Naive thymus-derived CD4-positive, alpha-beta T cell (primary cell): ENCODE measurements at regions of chr3 and their contacts with region 1.

Region 1: GRCh38 chr3:182713743-182714517 is 79.4 kb upstream of the ATP11B start:
- DNase-seq: peak in 6 of 9 donors; percentile 11 to 51 (median 33)
- ATAC-seq: peak; percentile 66
- H3K4me3 ChIP-seq: no peak overlapping the region
- H3K4me3 Mint-ChIP-seq: no peak overlapping the region
- H3K27ac ChIP-seq: no peak overlapping the region
- H3K27ac Mint-ChIP-seq: no peak overlapping the region
- H3K4me1 ChIP-seq: no peaks in the 10 kb centered on the region
- H3K4me1 Mint-ChIP-seq: peaks cover 4 to 16% (median 7%) of the 10 kb centered on the region in 7 donors
- H3K27me3 ChIP-seq: no peaks in the 10 kb centered on the region
- H3K27me3 Mint-ChIP-seq: peaks cover 0 to 2% (median 0%) of the 10 kb centered on the region in 5 donors

Region 2: GRCh38 chr3:182692021-182692420 is 21.9 kb before region 1 on chr3:
- CTCF ChIA-PET with region 1: no interaction called
- POLR2A ChIA-PET with region 1: no interaction called
- intact Hi-C with region 1: no loop called
- DNase-seq: no peak
- ATAC-seq: no peak
- H3K4me3 ChIP-seq: no peak overlapping the region
- H3K4me3 Mint-ChIP-seq: no peak overlapping the region
- H3K27ac ChIP-seq: no peak overlapping the region
- H3K27ac Mint-ChIP-seq: no peak overlapping the region
- H3K4me1 ChIP-seq: no peaks in the 10 kb centered on the region
- H3K4me1 Mint-ChIP-seq: no peaks in the 10 kb centered on the region
- H3K27me3 ChIP-seq: no peaks in the 10 kb centered on the region
- H3K27me3 Mint-ChIP-seq: peaks cover 7 to 50% (median 25%) of the 10 kb centered on the region in 5 donors

Region 3: GRCh38 chr3:182837855-182838454 is 124.0 kb after region 1 on chr3:
- CTCF ChIA-PET with region 1: interaction called, 33 read pairs
- POLR2A ChIA-PET with region 1: interaction called, 3 read pairs
- intact Hi-C with region 1: loop called (anchors 1 kb)
- DNase-seq: peak in 6 of 9 donors; percentile 5 to 52 (median 34)
- ATAC-seq: peak; percentile 53
- H3K4me3 ChIP-seq: no peak overlapping the region
- H3K4me3 Mint-ChIP-seq: no peak overlapping the region
- H3K27ac ChIP-seq: no peak overlapping the region
- H3K27ac Mint-ChIP-seq: no peak overlapping the region
- H3K4me1 ChIP-seq: no peaks in the 10 kb centered on the region
- H3K4me1 Mint-ChIP-seq: peaks cover 3 to 20% (median 4%) of the 10 kb centered on the region in 7 donors
- H3K27me3 ChIP-seq: no peaks in the 10 kb centered on the region
- H3K27me3 Mint-ChIP-seq: no peaks in the 10 kb centered on the region

Region 4: GRCh38 chr3:182909318-182910040 is 195.5 kb after region 1 on chr3:
- CTCF ChIA-PET with region 1: no interaction called
- POLR2A ChIA-PET with region 1: no interaction called
- intact Hi-C with region 1: loop called in 1 of 2 experiments (anchors 10 kb)
- DNase-seq: peak in 1 of 9 donors; percentile 16
- ATAC-seq: peak; percentile 46
- H3K4me3 ChIP-seq: no peak overlapping the region
- H3K4me3 Mint-ChIP-seq: no peak overlapping the region
- H3K27ac ChIP-seq: peak overlapping the region; percentile 16
- H3K27ac Mint-ChIP-seq: peak overlapping the region in 8 of 9 donors; percentile 20 to 88 (median 72)
- H3K4me1 ChIP-seq: peaks cover 15 to 17% of the 10 kb centered on the region in 2 donors
- H3K4me1 Mint-ChIP-seq: peaks cover 22 to 50% (median 42%) of the 10 kb centered on the region in 7 donors
- H3K27me3 ChIP-seq: no peaks in the 10 kb centered on the region
- H3K27me3 Mint-ChIP-seq: no peaks in the 10 kb centered on the region

Region 5: DNA sequence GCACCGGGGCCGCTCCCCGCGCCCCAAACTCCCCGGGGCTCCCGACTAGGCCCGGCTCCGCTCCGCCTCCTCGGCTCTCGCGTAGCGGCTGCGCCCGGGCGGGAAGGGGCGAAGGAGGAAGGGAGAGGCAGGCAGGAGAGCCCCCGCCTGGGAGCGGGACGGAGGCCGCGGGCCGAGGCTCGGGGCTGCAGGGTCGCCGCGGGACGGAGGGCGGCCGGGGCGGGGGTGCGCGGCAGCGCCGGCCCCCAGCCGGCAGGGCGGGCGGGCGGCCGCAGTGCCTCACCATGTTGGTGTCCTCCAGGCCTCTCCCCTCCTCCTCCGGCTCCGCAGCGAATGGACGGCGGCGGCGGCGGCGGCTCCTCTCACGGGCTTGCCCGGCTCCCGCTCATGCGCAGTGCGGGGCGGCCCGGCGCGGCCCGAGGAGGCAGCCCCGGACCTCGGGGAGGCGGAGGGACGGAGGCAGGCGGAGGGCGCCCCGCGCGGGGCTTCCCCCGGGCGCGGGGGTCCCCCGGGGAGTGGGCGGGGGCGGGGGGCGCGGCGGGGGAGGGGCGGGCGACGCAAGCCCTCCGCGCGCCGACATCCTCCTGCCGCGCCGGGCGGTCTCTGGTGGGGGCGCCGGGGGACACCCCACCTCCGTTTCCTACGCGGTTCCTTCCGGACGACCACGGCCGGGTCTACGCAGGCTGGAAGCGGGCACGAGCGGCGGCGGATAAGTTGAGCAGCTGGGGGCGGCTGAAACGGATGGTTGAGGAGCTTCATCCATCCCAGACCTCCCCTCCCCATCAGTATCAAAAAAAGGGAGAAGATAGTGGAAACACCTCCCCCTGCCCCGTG is 266.5 kb after region 1 on chr3 and contains the start of gene DCUN1D1:
- CTCF ChIA-PET with region 1: no interaction called
- POLR2A ChIA-PET with region 1: no interaction called
- intact Hi-C with region 1: no loop called
- DNase-seq: peak; percentile 77 to 95 (median 85)
- ATAC-seq: peak; percentile 94
- H3K4me3 ChIP-seq: peak within 1 kb of the TSS; percentile 75
- H3K4me3 Mint-ChIP-seq: peak within 1 kb of the TSS in 9 of 10 donors; percentile 87 to 97 (median 91)
- H3K27ac ChIP-seq: peak within 1 kb of the TSS; percentile 79
- H3K27ac Mint-ChIP-seq: peak within 1 kb of the TSS; percentile 73 to 95 (median 91)
- H3K4me1 ChIP-seq: peaks cover 18 to 20% of the 10 kb centered on the region in 2 donors
- H3K4me1 Mint-ChIP-seq: peaks cover 14 to 46% (median 42%) of the 10 kb centered on the region in 7 donors
- H3K27me3 ChIP-seq: no peaks in the 10 kb centered on the region
- H3K27me3 Mint-ChIP-seq: no peaks in the 10 kb centered on the region
- total RNA-seq, gene DCUN1D1: 23.7 to 53.0 (median 34.0) TPM

Region 6: GRCh38 chr3:183188895-183189462 is 475.0 kb after region 1 on chr3:
- CTCF ChIA-PET with region 1: no interaction called
- POLR2A ChIA-PET with region 1: no interaction called
- intact Hi-C with region 1: loop called in 1 of 2 experiments (anchors 1 kb)
- DNase-seq: peak in 1 of 9 donors; percentile 17
- ATAC-seq: peak; percentile 50
- H3K4me3 ChIP-seq: no peak overlapping the region
- H3K4me3 Mint-ChIP-seq: no peak overlapping the region
- H3K27ac ChIP-seq: no peak overlapping the region
- H3K27ac Mint-ChIP-seq: no peak overlapping the region
- H3K4me1 ChIP-seq: no peaks in the 10 kb centered on the region
- H3K4me1 Mint-ChIP-seq: peaks cover 0 to 16% (median 0%) of the 10 kb centered on the region in 7 donors
- H3K27me3 ChIP-seq: no peaks in the 10 kb centered on the region
- H3K27me3 Mint-ChIP-seq: no peaks in the 10 kb centered on the region

Region 7: DNA sequence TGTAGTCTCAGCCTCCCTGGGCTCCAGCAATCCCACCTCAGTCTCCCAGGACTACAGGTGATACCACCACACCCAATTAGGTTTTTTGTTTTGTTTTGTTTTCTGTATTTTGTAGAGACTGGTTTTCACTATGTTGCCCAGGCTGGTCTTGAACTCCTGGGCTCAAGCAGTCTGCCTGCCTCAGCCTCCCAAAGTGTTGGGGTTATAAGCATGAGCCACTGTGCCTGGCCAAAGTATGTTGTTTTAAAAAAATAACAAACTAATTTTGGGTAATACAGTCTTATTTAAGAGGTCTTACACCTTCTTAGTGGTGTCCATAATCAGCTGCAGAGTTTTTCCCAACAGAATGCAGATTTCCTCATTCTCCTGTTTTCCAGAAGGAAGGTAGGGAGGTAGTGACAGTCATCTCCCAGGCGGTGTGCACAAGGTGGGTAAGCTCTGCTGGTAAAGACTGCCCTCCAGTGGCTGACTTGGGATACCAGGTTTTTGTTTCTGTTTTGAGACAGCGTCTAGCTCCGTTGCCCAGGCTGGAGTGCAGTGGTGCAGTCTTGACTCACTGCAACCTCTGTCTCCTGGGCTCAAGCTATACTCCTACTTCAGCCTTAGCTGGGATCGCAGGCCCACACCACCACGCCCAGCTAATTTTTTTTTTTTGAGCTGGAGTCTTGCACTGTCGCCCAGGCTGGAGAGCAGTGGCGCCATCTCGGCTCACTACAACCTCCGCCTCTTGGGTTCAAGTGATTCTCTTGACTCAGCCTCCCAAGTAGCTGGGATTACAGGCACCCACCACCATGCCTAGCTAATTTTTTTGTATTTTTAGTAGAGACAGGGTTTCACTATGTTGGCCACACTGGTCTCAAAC is 1053.0 kb after region 1 on chr3:
- CTCF ChIA-PET with region 1: no interaction called
- POLR2A ChIA-PET with region 1: no interaction called
- intact Hi-C with region 1: loop called in 1 of 2 experiments (anchors 5 kb)
- DNase-seq: peak; percentile 41 to 72 (median 65)
- ATAC-seq: peak; percentile 96
- H3K4me3 ChIP-seq: no peak overlapping the region
- H3K4me3 Mint-ChIP-seq: no peak overlapping the region
- H3K27ac ChIP-seq: no peak overlapping the region
- H3K27ac Mint-ChIP-seq: peak overlapping the region in 4 of 9 donors; percentile 3 to 73 (median 40)
- H3K4me1 ChIP-seq: no peaks in the 10 kb centered on the region
- H3K4me1 Mint-ChIP-seq: peaks cover 5 to 18% (median 12%) of the 10 kb centered on the region in 7 donors
- H3K27me3 ChIP-seq: no peaks in the 10 kb centered on the region
- H3K27me3 Mint-ChIP-seq: no peaks in the 10 kb centered on the region